ENCODE measurements at regions of chr2 and their contacts with region 1.

Region 1: DNA sequence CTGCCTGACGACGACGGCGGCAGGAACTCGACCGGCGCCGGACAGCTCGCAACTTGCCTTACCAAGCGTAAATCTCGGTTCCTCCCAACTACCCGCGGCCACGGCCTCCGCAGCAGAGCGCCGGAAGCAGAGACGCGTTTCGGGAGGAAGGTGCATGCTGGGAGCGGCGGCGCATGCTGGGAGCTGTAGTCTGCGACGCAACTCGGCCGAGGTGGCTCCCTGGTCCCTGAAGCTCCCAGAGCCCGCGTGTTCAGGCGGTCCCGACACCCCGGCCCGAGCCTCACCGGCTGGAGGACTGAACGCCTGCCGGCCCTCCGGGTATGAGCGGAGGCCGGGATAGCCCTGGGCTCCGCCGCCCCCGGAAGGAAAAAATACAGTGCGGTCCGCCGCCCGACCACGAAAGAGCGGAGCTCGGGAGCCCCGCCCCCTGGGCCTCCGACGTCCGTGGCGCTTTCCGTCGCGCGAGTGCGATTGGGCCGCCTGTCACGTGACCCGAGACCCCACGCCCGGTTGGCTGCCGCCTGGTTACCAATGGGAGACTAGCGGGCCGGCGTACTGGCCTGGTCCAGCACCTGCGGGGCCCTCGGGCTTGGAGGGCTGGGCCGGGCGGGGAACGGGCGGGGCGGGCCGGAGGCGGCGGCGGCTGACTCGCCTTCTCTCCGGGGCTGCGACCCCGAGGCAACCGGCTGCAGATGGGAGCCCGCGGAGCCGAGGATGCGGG is at the start of gene CAPN10:
- DNase-seq: peak; percentile 94
- ATAC-seq: peak; percentile 92
- H3K4me3 ChIP-seq: peak within 1 kb of the TSS; percentile 83 to 90 (median 88)
- H3K27ac ChIP-seq: peak within 1 kb of the TSS; percentile 89
- H3K4me1 ChIP-seq: peaks cover 59% of the 10 kb centered on the region
- H3K27me3 ChIP-seq: peaks cover 0 to 4% of the 10 kb centered on the region in 2 experiments; a peak in 1 of 5 replicates
- CTCF ChIP-seq: no peak; the same call in 1 of the 2 replicates
- EP300 ChIP-seq: peak; percentile 31 to 53; a peak in 1 of 4 replicates
- POLR2A ChIP-seq: peak in 1 of 2 experiments; percentile 81; a peak in 2 of 4 replicates
- RAD21 ChIP-seq: no peak; the same call in none of the 2 replicates
- total RNA-seq, gene CAPN10: 16.5 and 32.4 TPM in 2 replicates

Region 2: DNA sequence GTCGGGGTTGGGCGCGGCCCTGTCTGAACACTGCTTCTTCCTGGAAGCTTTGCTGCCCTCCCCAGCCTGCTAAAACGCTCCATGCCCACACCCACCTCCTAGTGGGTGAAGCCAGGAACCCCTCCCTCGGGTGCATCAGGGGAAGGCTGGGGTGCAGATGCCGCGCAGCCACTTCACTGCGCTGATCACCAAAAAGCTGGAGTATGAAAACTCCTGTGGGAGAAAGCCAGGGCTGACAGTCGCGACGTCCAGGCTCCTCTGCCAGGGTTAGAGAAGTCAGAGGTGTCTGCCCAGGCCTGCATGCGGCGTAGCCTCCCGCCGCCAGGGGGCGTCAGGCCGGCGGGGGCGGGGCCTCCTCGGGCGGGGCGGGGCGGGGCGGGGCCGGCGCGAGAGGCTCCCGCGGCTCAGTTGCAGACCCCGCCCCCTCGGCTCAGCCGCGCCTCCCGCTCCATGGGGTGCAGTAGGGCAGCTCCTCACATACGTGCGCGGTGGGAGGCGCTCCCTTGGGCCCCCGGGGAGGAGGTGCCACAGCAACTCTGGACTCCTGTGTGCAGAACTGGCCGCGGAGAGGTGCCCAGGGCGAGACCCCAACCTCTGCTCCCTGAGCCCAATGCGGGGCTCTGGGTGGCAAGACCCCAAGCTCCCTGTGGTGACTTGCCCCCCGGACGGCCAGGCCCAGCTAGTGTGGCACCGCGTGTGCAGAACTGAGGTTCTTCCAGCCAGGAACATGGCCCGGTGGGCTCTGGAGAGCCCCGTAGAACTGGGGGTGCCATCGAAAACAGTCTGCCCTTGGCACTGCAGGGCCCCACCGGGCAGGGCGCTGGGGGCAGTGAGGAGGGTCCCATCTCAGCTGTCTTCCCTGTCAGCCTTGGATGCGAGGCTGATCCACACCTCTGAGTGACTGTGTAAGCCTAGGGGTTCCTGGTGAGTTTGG is 19.9 kb before region 1 on chr2:
- CTCF ChIA-PET with region 1: interaction called, 3 read pairs
- POLR2A ChIA-PET with region 1: interaction called, 149 read pairs
- in situ Hi-C with region 1: no loop called
- intact Hi-C with region 1: loop called (anchors 2 kb)
- DNase-seq: peak; percentile 92
- ATAC-seq: peak; percentile 83
- H3K4me3 ChIP-seq: peak overlapping the region; percentile 71 to 89 (median 71)
- H3K27ac ChIP-seq: peak overlapping the region; percentile 71
- H3K4me1 ChIP-seq: peaks cover 57% of the 10 kb centered on the region
- H3K27me3 ChIP-seq: no peaks in the 10 kb centered on the region; a peak in 1 of 5 replicates
- CTCF ChIP-seq: peak; percentile 81
- EP300 ChIP-seq: no peak
- POLR2A ChIP-seq: peak in 1 of 2 experiments; percentile 56; a peak in 2 of 4 replicates
- RAD21 ChIP-seq: peak; percentile 10

Region 3: GRCh38 chr2:240624950-240625621 is 38.7 kb after region 1 on chr2 and contains the start of gene GPR35:
- CTCF ChIA-PET with region 1: no interaction called
- POLR2A ChIA-PET with region 1: interaction called, 9 read pairs
- in situ Hi-C with region 1: no loop called
- intact Hi-C with region 1: loop called (anchors 1 kb)
- DNase-seq: no peak
- ATAC-seq: no peak
- H3K4me3 ChIP-seq: peak within 1 kb of the TSS in 1 of 3 experiments; percentile 51; a peak in 1 of 6 replicates
- H3K27ac ChIP-seq: peak within 1 kb of the TSS; percentile 92
- H3K4me1 ChIP-seq: peaks cover 47% of the 10 kb centered on the region
- H3K27me3 ChIP-seq: no peaks in the 10 kb centered on the region; a peak in 1 of 5 replicates
- CTCF ChIP-seq: no peak
- EP300 ChIP-seq: no peak
- POLR2A ChIP-seq: no peak; a peak in 1 of 4 replicates
- RAD21 ChIP-seq: no peak
- total RNA-seq, gene GPR35: 21.6 and 27.1 TPM in 2 replicates